ENCODE measurements at regions of chr1 and their contacts with region 1.

Region 1: DNA sequence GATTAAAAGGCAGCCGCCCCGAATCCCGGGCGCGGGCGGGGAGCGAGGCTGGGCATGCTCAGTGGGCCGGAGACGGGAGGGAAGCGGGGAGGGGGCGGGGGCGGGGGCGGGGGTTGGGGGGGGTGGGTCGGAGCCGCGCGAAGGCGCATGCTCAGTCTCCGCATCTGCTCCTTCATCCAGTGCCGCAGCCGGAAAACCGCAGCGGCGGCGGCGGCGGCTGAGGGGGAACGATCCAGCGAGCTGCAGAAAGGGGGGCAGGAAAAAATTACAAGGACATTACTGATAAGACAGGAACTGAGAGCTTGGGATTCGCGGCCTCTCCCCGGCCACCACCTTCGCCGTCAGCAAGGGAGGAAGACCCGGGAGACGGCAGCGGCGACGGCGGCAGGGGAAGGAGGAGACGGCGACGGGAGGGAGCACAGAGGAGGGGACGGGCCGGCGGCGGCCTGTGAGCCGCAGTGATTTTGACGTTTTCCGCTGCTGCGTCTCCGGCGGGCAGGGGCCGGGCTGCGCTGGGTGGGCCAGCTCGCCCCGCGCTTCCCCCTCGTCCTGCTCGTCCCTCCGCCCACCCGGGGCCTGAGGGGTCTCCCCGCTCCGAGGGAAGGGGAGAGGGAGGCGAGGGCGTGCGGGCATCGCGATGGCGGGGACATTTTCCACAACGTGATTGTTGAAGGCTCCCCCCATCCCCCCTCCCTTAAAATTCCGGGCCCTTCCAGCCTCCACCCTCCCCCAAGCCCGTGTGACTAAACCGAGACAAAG is at the start of gene CAMSAP2:
- DNase-seq: peak; percentile 10
- H3K4me3 ChIP-seq: peak within 1 kb of the TSS; percentile 82 to 98 (median 88)
- H3K27ac ChIP-seq: peak within 1 kb of the TSS; percentile 98 to 100 (median 99)
- H3K4me1 ChIP-seq: peaks cover 0 to 53% (median 4%) of the 10 kb centered on the region in 3 donors
- H3K27me3 ChIP-seq: no peaks in the 10 kb centered on the region
- CTCF ChIP-seq: peak in 1 of 6 experiments; percentile 8
- POLR2A ChIP-seq: peak in 3 of 4 donors; percentile 42 to 91 (median 76)
- total RNA-seq, gene CAMSAP2: 9.2 to 27.5 (median 19.7) TPM

Region 2: GRCh38 chr1:200669314-200670241 is 69.3 kb before region 1 on chr1 and contains the start of gene DDX59:
- intact Hi-C with region 1: loop called (anchors 10 kb)
- DNase-seq: peak; percentile 69
- H3K4me3 ChIP-seq: peak within 1 kb of the TSS; percentile 55 to 98 (median 84)
- H3K27ac ChIP-seq: peak within 1 kb of the TSS; percentile 97 to 100 (median 98)
- H3K4me1 ChIP-seq: peaks cover 13 to 66% (median 28%) of the 10 kb centered on the region in 3 donors
- H3K27me3 ChIP-seq: no peaks in the 10 kb centered on the region
- CTCF ChIP-seq: no peak
- POLR2A ChIP-seq: peak in 3 of 4 donors; percentile 73 to 92 (median 92)
- total RNA-seq, gene DDX59: 10.2 to 16.8 (median 12.4) TPM